AG04449 (cell line): ENCODE measurements at regions of chr7 and their contacts with region 1.

Region 1: DNA sequence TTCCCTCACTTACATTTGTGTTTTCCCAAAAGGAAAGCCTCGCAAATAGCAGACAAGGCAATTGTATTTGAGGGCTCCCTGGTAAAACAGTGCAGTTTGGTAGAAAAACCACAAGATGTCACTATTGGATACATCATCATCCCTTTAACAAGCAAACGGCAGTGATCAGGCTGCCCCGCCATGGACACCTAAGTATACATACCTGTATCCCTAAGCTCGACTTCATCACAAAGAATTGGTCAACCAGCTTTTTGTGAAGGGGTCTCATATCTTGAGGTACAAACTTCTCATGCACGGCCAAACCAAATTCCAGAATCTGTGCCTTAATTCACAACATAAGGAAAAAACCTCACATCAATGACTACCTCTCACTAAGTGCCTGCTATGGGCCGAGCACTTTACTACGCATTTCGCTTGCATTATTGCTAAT is 179.5 kb upstream of the IMMP2L start:
- DNase-seq: no peak
- H3K4me3 ChIP-seq: no peak overlapping the region
- CTCF ChIP-seq: peak; percentile 62

Region 2: DNA sequence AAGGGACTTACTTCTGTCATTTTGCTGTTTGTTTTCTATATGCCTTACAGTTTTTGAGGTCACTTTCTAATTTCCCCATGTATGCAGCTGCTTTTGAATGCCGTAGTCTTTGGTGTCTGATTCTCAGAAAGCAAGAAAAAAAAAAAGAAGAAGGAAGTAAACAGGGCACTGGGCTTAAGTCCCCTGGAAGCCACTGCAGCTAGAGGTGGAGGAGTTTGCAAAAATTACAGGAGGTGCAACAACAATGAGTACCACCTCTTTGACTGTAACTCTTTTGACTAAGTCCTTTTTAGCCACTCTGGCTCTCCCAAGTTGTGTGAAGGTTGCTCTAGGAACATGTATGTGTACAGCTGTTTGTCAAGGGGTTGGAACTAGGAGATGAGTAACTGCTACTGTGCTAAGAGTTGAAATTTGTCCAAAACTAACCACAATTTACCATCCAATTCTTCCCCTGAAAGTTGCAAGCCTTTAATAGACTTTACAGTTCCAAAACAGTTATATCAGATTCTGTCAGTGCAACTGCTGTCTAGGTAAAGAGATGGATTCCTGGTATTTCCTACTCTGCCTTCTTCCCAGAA is 1238.8 kb before region 1 on chr7:
- CTCF ChIA-PET with region 1: no interaction called
- POLR2A ChIA-PET with region 1: no interaction called
- DNase-seq: peak; percentile 4
- H3K4me3 ChIP-seq: no peak overlapping the region
- CTCF ChIP-seq: no peak

Region 3: DNA sequence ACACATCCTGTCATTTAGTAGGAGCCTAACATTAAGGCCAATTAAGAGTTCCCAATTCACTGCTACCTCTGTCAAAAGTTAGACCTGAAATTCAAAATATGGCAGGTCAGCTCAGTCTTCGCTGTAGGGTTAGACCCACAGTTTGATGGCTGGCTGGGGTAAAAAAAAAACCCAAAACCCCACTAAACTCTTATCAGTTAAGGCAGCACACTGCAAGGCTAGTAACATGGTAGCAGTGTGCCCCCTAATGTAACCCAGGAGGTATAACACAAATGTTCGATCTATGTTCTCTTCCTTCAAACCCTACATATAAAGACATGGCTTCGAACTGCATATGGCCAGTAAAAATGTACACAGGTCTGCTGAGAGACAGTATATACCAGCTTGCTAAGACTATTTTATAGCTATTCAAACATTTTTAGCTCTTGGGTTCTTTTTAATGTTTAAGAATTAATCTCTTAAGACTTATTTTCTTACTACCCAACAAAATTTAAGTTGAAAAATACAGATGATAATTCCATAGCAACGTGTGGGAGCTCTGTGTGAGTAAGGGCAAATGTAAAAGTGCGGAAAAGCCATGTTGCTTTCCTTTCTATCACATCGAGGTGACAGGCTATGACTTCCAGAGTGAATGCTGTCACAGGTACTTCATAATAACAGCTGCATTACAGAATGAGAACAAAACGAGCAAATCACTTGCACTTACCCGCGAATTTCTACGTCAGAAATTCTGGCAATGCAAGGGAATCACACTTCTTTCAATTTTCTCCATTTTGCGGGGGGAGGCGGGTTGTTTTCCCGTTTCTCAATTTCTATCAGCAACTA is 11.1 kb before region 1 on chr7:
- CTCF ChIA-PET with region 1: interaction called, 32 read pairs
- POLR2A ChIA-PET with region 1: no interaction called
- DNase-seq: no peak
- H3K4me3 ChIP-seq: no peak overlapping the region
- CTCF ChIP-seq: peak; percentile 30

Region 4: DNA sequence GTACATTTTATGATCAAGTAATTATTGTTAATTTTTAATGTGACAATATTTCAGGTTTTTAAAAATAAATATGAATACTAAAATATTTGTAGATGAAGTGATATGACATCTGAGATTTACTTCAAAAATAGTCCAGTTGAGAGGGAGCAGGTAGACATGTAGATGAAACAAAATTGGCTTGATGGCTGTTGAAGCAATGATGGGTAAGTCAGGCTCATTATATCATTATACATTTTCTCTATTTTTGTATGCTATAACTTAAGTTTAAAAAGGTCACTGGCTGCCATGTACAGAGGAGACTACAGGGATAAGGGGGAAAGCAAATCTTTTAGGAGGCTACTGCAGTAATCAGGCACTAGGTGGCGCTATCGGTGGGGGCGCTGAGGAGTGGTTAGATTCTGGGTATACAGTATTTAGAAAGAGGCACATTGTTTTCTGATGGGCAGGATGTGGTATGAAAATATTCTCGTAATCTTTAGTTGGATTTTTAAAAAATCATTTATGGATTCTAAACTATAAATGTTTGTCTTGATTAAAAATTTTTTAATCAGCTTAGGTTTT is 10.3 kb after region 1 on chr7:
- CTCF ChIA-PET with region 1: interaction called, 41 read pairs
- POLR2A ChIA-PET with region 1: no interaction called
- DNase-seq: no peak
- H3K4me3 ChIP-seq: no peak overlapping the region
- CTCF ChIP-seq: peak; percentile 80